A549 (cell line): ENCODE measurements at regions of chr5 and their contacts with region 1.

Region 1: GRCh38 chr5:119840175-119840574 is 210.8 kb downstream of the FAM170A start:
- DNase-seq: no peak
- ATAC-seq: no peak
- H3K4me3 ChIP-seq: no peak overlapping the region
- H3K27ac ChIP-seq: no peak overlapping the region
- H3K4me1 ChIP-seq: no peaks in the 10 kb centered on the region
- CTCF ChIP-seq: no peak
- EP300 ChIP-seq: no peak
- POLR2A ChIP-seq: no peak
- RAD21 ChIP-seq: no peak

Region 2: GRCh38 chr5:119596046-119596445 is 244.1 kb before region 1 on chr5:
- CTCF ChIA-PET with region 1: no interaction called
- POLR2A ChIA-PET with region 1: no interaction called
- DNase-seq: no peak
- ATAC-seq: no peak
- H3K4me3 ChIP-seq: no peak overlapping the region
- H3K27ac ChIP-seq: no peak overlapping the region
- H3K4me1 ChIP-seq: no peaks in the 10 kb centered on the region
- CTCF ChIP-seq: no peak
- EP300 ChIP-seq: no peak
- POLR2A ChIP-seq: no peak
- RAD21 ChIP-seq: no peak

Region 3: GRCh38 chr5:119752921-119753886 is 87.0 kb before region 1 on chr5:
- CTCF ChIA-PET with region 1: no interaction called
- POLR2A ChIA-PET with region 1: interaction called, 10 read pairs
- DNase-seq: no peak
- ATAC-seq: no peak
- H3K4me3 ChIP-seq: no peak overlapping the region
- H3K27ac ChIP-seq: no peak overlapping the region
- H3K4me1 ChIP-seq: no peaks in the 10 kb centered on the region
- CTCF ChIP-seq: no peak
- EP300 ChIP-seq: no peak
- POLR2A ChIP-seq: no peak
- RAD21 ChIP-seq: no peak

Region 4: DNA sequence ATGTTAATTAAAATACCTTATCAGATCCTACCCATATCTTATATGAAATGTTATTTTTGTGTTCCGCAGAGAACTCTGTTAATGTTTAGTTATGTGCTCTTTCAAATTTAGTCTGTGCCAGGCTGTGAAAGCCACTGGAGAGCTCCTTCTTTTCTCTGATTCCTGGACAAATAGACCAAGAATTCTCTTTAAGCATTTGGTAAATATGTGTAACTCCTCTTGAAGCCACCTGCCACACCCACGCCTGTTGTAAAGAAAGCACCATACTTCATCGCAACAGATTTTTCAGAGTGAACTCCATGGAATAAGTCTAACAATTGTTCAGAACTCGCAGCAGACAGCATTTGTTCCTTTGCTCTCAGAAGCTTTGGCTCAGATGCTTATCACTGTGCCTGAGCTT is 90.3 kb after region 1 on chr5:
- CTCF ChIA-PET with region 1: no interaction called
- POLR2A ChIA-PET with region 1: no interaction called
- DNase-seq: no peak
- ATAC-seq: no peak
- H3K4me3 ChIP-seq: no peak overlapping the region
- H3K27ac ChIP-seq: no peak overlapping the region
- H3K4me1 ChIP-seq: no peaks in the 10 kb centered on the region
- CTCF ChIP-seq: no peak
- EP300 ChIP-seq: no peak
- POLR2A ChIP-seq: no peak
- RAD21 ChIP-seq: no peak